ENCODE measurements at regions of chr15 and their contacts with region 1.

Region 1: GRCh38 chr15:92527197-92527596 is 128.4 kb downstream of the FAM174B start:
- DNase-seq: peak; percentile 17 to 63
- ATAC-seq: peak; percentile 67 to 97 (median 89)
- H3K4me3 ChIP-seq: no peak overlapping the region
- H3K27ac ChIP-seq: peak overlapping the region in 2 of 10 donors; percentile 18 to 47
- H3K4me1 ChIP-seq: peaks cover 0 to 7% (median 0%) of the 10 kb centered on the region in 9 donors
- H3K27me3 ChIP-seq: no peaks in the 10 kb centered on the region
- CTCF ChIP-seq: peak in 1 of 9 donors; percentile 6

Region 2: GRCh38 chr15:92322566-92323355 is 204.4 kb before region 1 on chr15:
- intact Hi-C with region 1: no loop called
- DNase-seq: peak in 1 of 2 donors; percentile 16
- ATAC-seq: peak in 5 of 8 donors; percentile 19 to 47 (median 30)
- H3K4me3 ChIP-seq: no peak overlapping the region
- H3K27ac ChIP-seq: no peak overlapping the region
- H3K4me1 ChIP-seq: peaks cover 0 to 15% (median 0%) of the 10 kb centered on the region in 9 donors
- H3K27me3 ChIP-seq: no peaks in the 10 kb centered on the region
- CTCF ChIP-seq: no peak

Region 3: DNA sequence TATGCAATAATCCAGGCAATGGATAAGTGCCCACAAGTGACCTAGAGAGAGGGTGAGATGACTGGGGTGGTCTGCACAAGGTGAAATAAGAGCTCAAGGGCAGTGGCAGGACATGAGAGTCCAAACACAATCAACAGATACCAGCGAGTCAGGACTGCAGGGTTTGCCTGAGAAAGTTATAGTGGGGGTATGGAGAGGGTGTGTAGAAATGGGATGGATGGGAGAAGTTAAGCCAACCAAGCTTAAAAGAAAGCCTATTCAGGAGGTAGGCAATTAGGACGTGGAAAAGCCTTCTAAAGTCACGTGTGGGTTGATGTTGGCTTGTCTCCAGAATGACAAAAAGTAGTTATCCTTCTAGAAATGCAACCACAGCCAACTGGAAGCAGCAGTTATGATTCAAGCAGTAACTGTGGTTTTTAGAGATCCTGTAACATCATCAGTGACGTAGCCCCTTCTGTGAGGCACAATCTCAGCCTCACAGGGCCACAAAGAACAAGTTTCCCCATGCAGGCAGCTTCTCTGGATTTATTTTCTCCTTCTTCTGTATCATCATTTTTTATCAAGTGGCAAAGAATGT is 72.3 kb after region 1 on chr15:
- intact Hi-C with region 1: loop called in 3 of 10 experiments (anchors 5 to 10 kb)
- DNase-seq: no peak
- ATAC-seq: no peak
- H3K4me3 ChIP-seq: no peak overlapping the region
- H3K27ac ChIP-seq: no peak overlapping the region
- H3K4me1 ChIP-seq: peaks cover 0 to 9% (median 0%) of the 10 kb centered on the region in 9 donors
- H3K27me3 ChIP-seq: no peaks in the 10 kb centered on the region
- CTCF ChIP-seq: no peak

Region 4: GRCh38 chr15:92714477-92715401 is 187.5 kb after region 1 on chr15:
- intact Hi-C with region 1: loop called in 4 of 10 experiments (anchors 2 to 5 kb)
- DNase-seq: peak; percentile 68 to 80
- ATAC-seq: peak; percentile 89 to 95 (median 92)
- H3K4me3 ChIP-seq: peak overlapping the region; percentile 39 to 79 (median 62)
- H3K27ac ChIP-seq: peak overlapping the region in 9 of 10 donors; percentile 19 to 76 (median 66)
- H3K4me1 ChIP-seq: peaks cover 0 to 12% (median 4%) of the 10 kb centered on the region in 9 donors
- H3K27me3 ChIP-seq: no peaks in the 10 kb centered on the region
- CTCF ChIP-seq: peak; percentile 86 to 98 (median 93)